Activated naive CD4-positive, alpha-beta T cell treated with anti-CD3 and anti-CD28 coated beads for 36 hours (primary cell): ENCODE measurements at regions of chr14 and their contacts with region 1.

Region 1: GRCh38 chr14:89954070-89955028 is at the start of gene EFCAB11:
- DNase-seq: peak; percentile 97
- H3K4me3 Mint-ChIP-seq: peak within 1 kb of the TSS; percentile 94
- H3K27ac Mint-ChIP-seq: peak within 1 kb of the TSS; percentile 89
- H3K4me1 Mint-ChIP-seq: peaks cover 37% of the 10 kb centered on the region
- H3K27me3 Mint-ChIP-seq: no peaks in the 10 kb centered on the region
- total RNA-seq, gene EFCAB11: 7.0 to 9.5 TPM

Region 2: GRCh38 chr14:89303457-89304435 is 650.6 kb before region 1 on chr14:
- CTCF ChIA-PET with region 1: no interaction called
- intact Hi-C with region 1: loop called (anchors 2 kb)
- DNase-seq: peak; percentile 61
- H3K4me3 Mint-ChIP-seq: peak overlapping the region; percentile 62
- H3K27ac Mint-ChIP-seq: peak overlapping the region; percentile 92
- H3K4me1 Mint-ChIP-seq: peaks cover 67% of the 10 kb centered on the region
- H3K27me3 Mint-ChIP-seq: no peaks in the 10 kb centered on the region

Region 3: GRCh38 chr14:89618811-89619551 is 335.4 kb before region 1 on chr14:
- CTCF ChIA-PET with region 1: no interaction called
- intact Hi-C with region 1: loop called (anchors 2 kb)
- DNase-seq: peak; percentile 60
- H3K4me3 Mint-ChIP-seq: peak overlapping the region; percentile 86
- H3K27ac Mint-ChIP-seq: peak overlapping the region; percentile 98
- H3K4me1 Mint-ChIP-seq: peaks cover 64% of the 10 kb centered on the region
- H3K27me3 Mint-ChIP-seq: no peaks in the 10 kb centered on the region

Region 4: DNA sequence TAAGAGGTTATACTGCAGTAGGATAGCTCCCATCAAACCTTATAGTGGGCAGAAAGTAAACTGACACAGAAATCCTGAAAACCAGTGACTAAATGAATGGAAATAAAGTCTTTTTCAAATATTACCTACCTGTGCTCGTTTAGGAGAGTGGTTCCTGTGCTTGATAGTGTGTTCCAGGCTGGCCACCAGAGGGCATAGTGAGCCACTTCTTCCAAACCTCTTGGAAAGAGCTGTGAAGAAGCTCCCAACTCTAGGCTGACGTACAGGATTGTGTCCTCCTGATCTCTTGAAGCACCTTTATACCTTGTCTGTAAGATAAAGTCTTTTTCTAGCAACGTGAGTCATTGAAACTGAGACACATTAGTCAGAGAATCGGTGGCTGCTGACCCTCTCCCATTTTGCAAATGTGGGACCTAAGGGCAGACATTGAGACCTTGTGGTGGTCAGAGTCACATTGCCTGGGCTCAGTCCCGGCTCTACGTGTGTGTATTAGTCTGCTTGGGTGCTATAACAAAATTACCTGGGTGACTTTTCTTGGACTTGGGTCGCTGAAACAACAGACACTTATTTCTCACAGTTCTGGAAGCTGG is 19.0 kb after region 1 on chr14:
- CTCF ChIA-PET with region 1: interaction called, 36 read pairs
- intact Hi-C with region 1: no loop called
- DNase-seq: peak; percentile 70
- H3K4me3 Mint-ChIP-seq: no peak overlapping the region
- H3K27ac Mint-ChIP-seq: no peak overlapping the region
- H3K4me1 Mint-ChIP-seq: no peaks in the 10 kb centered on the region
- H3K27me3 Mint-ChIP-seq: no peaks in the 10 kb centered on the region

Region 5: DNA sequence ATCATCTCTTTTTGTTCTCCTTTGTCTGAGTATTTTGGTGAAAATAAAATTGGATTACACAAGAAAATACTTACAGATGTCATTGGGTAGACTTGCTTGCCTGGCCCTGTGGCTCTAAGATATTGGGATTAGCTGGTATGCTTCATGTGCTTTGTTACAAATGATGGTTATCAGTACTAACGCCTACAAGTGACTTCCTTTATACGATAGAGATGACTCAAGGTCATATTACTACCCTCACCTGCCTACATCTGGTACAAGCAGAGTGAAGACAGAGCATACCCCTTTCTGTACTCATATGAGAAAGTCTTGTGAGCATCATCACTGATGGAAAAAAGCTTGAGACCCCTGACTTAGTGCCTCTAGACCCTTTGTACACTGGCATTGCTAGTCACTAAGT is 49.6 kb after region 1 on chr14:
- CTCF ChIA-PET with region 1: no interaction called
- intact Hi-C with region 1: no loop called
- DNase-seq: no peak
- H3K4me3 Mint-ChIP-seq: no peak overlapping the region
- H3K27ac Mint-ChIP-seq: no peak overlapping the region
- H3K4me1 Mint-ChIP-seq: peaks cover 15% of the 10 kb centered on the region
- H3K27me3 Mint-ChIP-seq: no peaks in the 10 kb centered on the region

Region 6: GRCh38 chr14:90383075-90383730 is 428.9 kb after region 1 on chr14:
- CTCF ChIA-PET with region 1: no interaction called
- intact Hi-C with region 1: loop called (anchors 1 kb)
- DNase-seq: peak; percentile 99
- H3K4me3 Mint-ChIP-seq: no peak overlapping the region
- H3K27ac Mint-ChIP-seq: no peak overlapping the region
- H3K4me1 Mint-ChIP-seq: peaks cover 23% of the 10 kb centered on the region
- H3K27me3 Mint-ChIP-seq: no peaks in the 10 kb centered on the region

Region 7: DNA sequence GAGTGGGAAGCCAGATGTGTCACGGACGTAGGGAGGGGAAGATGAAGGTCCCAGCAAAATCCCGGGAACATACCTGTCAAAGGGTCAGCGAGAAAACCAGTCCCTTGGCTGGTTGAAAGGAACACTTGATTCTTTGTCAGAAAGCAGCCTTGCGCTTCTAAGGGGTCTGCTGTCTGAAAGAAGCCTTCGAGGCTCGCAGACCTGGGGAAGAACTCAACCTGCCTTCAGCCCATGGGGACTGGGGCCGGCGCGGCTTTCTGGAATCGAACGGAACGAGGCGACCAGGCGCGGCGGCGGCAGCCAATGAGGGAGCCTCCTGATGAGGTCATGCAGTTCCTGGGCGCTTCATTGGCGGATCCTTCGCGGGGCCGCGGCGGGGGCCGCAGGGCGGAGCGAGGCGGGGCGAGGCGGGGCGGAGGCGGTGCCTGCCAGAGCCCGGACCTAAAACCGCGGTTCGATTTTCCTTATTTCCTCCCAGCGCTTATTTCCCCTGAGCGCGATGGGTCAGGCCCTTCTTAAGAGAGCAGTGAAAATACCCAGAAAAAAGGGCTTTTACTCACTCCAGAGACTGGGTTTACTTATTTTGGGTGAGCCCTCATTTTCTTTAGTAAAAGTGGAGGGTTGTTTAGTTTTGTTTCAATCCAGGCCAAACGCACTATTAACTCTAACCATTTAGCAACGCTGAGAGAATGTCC is 873.7 kb after region 1 on chr14:
- CTCF ChIA-PET with region 1: no interaction called
- intact Hi-C with region 1: loop called (anchors 2 kb)
- DNase-seq: peak; percentile 96
- H3K4me3 Mint-ChIP-seq: peak overlapping the region; percentile 76
- H3K27ac Mint-ChIP-seq: peak overlapping the region; percentile 66
- H3K4me1 Mint-ChIP-seq: peaks cover 17% of the 10 kb centered on the region
- H3K27me3 Mint-ChIP-seq: no peaks in the 10 kb centered on the region

Region 8: GRCh38 chr14:91510174-91511042 is 1556.1 kb after region 1 on chr14 and contains the start of gene PPP4R3A:
- CTCF ChIA-PET with region 1: no interaction called
- intact Hi-C with region 1: loop called (anchors 10 kb)
- DNase-seq: peak; percentile 95
- H3K4me3 Mint-ChIP-seq: peak within 1 kb of the TSS; percentile 99
- H3K27ac Mint-ChIP-seq: peak within 1 kb of the TSS; percentile 100
- H3K4me1 Mint-ChIP-seq: peaks cover 23% of the 10 kb centered on the region
- H3K27me3 Mint-ChIP-seq: no peaks in the 10 kb centered on the region
- total RNA-seq, gene PPP4R3A: 114 to 118 TPM